AG04449 (cell line): ENCODE measurements at regions of chr1 and their contacts with region 1.

Region 1: GRCh38 chr1:156356875-156357534 is 12.0 kb upstream of the RHBG start:
- DNase-seq: no peak
- H3K4me3 ChIP-seq: no peak overlapping the region
- CTCF ChIP-seq: no peak

Region 2: GRCh38 chr1:155976062-155976912 is 380.7 kb before region 1 on chr1:
- CTCF ChIA-PET with region 1: no interaction called
- POLR2A ChIA-PET with region 1: no interaction called
- DNase-seq: no peak
- H3K4me3 ChIP-seq: peak overlapping the region; percentile 88
- CTCF ChIP-seq: no peak

Region 3: DNA sequence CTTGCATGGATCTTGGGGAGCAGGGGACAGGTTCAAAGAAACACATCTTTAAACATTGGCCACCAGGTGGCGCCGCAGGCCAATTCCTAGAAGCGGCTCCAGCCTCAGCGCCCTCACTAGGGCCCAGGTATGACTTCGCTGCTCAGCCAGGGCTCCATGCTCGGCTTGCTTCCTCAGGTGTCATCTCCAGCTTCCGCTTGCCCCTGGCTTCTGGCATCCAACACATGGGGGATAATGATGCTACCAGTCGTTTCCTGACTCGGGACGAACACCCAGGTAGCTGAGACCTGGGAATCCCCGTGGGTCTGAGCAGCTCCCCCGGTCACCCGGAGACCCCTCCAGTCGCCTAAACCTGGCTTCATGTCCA is 266.2 kb before region 1 on chr1:
- CTCF ChIA-PET with region 1: interaction called, 15 read pairs
- POLR2A ChIA-PET with region 1: no interaction called
- DNase-seq: no peak
- H3K4me3 ChIP-seq: no peak overlapping the region
- CTCF ChIP-seq: peak; percentile 72

Region 4: GRCh38 chr1:156233426-156234127 is 123.4 kb before region 1 on chr1:
- CTCF ChIA-PET with region 1: interaction called, 18 read pairs
- POLR2A ChIA-PET with region 1: no interaction called
- DNase-seq: peak; percentile 63
- H3K4me3 ChIP-seq: no peak overlapping the region
- CTCF ChIP-seq: no peak

Region 5: GRCh38 chr1:156319664-156320063 is 37.3 kb before region 1 on chr1:
- CTCF ChIA-PET with region 1: interaction called, 23 read pairs
- POLR2A ChIA-PET with region 1: no interaction called
- DNase-seq: no peak
- H3K4me3 ChIP-seq: no peak overlapping the region
- CTCF ChIP-seq: peak; percentile 23

Region 6: DNA sequence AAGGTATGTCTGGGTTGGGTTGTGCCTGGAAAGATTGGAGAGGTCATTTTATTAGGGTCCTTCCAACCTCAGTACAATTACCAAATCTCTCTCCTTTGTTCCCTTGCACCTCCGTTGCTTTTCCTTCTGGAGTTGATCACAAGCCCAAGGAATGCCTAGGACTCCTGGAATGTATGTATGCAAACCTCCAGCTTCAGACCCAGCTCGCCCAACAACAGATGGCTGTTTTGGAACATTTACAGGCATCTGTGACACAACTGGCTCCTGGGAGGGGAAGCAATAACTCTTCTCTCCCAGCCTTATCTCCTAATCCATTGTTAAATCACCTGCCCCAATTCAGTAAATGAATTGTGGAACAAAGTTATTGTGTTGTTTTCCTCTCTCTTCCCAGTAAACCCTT is 10.4 kb before region 1 on chr1:
- CTCF ChIA-PET with region 1: interaction called, 82 read pairs
- POLR2A ChIA-PET with region 1: no interaction called
- DNase-seq: peak; percentile 55
- H3K4me3 ChIP-seq: no peak overlapping the region
- CTCF ChIP-seq: no peak